ENCODE measurements at regions of chr1 and their contacts with region 1.

Region 1: DNA sequence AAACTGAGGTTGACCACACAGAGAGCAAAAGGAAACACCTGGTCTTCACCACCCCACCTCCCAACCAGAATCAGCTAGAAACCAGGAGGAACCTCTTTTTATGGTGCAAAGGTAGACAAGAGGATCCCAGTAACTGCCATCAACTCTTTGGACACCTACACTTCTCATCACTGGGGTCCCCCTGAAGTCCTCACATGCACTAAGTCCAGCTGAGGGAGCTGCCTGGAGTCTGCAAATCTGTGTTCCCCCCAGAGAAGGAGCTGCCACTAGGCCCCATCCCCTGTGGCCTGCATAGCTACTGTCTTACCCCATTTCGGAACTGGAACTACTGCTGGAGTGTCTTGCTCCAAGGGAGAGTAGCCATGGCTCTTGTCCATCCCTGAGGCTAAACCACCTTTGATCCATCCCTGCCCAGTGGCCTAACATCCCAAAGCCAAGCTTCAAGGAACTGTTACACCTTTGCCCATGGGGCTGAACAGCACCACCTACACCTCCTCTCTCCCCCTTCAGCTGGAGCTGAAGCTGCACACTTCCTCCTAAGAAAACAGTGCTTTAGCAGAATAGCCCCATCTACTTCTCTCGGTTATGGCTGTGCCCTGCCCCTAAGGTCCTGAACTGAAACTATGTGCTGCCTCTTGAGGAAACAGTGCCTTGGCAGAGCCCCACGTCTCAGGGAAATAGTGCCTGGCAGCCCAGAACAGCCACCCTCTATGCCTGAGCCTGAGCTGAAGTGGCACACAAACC is 85.4 kb upstream of the CD53 start:
- DNase-seq: peak; percentile 64 to 82 (median 75)
- H3K4me3 ChIP-seq: peak overlapping the region in 1 of 2 donors; percentile 19
- H3K4me3 Mint-ChIP-seq: peak overlapping the region; percentile 78 to 88 (median 82)
- H3K27ac ChIP-seq: peak overlapping the region; percentile 34
- H3K27ac Mint-ChIP-seq: peak overlapping the region; percentile 76 to 95 (median 92)
- H3K4me1 ChIP-seq: peaks cover 65% of the 10 kb centered on the region
- H3K4me1 Mint-ChIP-seq: peaks cover 55 to 70% (median 64%) of the 10 kb centered on the region in 4 donors
- H3K27me3 ChIP-seq: no peaks in the 10 kb centered on the region
- H3K27me3 Mint-ChIP-seq: peaks cover 0 to 1% of the 10 kb centered on the region in 2 donors

Region 2: GRCh38 chr1:110630839-110631663 is 156.4 kb before region 1 on chr1:
- CTCF ChIA-PET with region 1: interaction called, 19 read pairs
- POLR2A ChIA-PET with region 1: interaction called, 16 read pairs
- intact Hi-C with region 1: loop called (anchors 1 kb)
- DNase-seq: peak; percentile 87 to 92 (median 88)
- H3K4me3 ChIP-seq: peak overlapping the region; percentile 25 to 46
- H3K4me3 Mint-ChIP-seq: no peak overlapping the region
- H3K27ac ChIP-seq: peak overlapping the region; percentile 72
- H3K27ac Mint-ChIP-seq: no peak overlapping the region
- H3K4me1 ChIP-seq: peaks cover 95% of the 10 kb centered on the region
- H3K4me1 Mint-ChIP-seq: peaks cover 32 to 57% (median 54%) of the 10 kb centered on the region in 4 donors
- H3K27me3 ChIP-seq: no peaks in the 10 kb centered on the region
- H3K27me3 Mint-ChIP-seq: no peaks in the 10 kb centered on the region

Region 3: DNA sequence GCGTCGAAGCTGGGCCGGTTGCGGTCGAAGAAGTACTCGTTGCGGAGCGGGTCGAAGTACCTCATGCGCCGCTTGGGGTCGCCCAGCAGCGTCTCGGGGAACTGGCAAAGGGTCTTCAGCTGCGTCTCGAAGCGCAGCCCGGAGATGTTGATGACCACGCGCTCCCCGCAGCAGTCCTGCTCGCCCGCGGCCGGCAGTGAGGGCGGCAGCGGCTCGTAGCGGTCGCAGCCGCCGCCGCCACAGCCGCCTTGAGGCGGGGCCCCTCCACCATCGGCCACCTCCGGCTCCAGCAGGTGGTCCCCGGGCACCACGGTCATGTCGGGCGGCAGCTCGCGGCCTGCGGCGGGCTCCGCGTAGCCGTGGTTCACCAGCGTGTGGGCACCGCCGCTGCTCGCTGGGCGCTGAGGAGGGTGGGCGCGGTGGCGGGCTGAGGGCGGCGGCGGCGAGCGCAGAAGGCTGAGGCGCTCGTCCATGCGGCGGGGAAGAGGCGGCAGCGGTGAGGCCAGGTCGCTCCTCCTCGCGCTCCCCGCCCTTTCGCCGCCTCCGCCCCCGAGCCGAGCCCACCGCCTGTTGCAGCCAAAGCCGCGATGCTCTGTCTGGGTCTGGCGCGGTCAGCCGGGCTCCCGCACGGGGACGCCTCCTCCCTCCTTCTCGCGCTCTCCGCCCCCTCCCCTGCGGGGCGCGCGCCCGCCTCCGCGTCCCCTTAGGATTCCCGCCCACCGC is 113.0 kb before region 1 on chr1 and contains the start of gene KCNA3:
- CTCF ChIA-PET with region 1: interaction called, 8 read pairs
- POLR2A ChIA-PET with region 1: interaction called, 31 read pairs
- intact Hi-C with region 1: no loop called
- DNase-seq: peak; percentile 67 to 79 (median 69)
- H3K4me3 ChIP-seq: peak within 1 kb of the TSS; percentile 73 to 78
- H3K4me3 Mint-ChIP-seq: peak within 1 kb of the TSS; percentile 84 to 100 (median 100)
- H3K27ac ChIP-seq: peak within 1 kb of the TSS; percentile 91
- H3K27ac Mint-ChIP-seq: peak within 1 kb of the TSS; percentile 76 to 100 (median 99)
- H3K4me1 ChIP-seq: peaks cover 38% of the 10 kb centered on the region
- H3K4me1 Mint-ChIP-seq: peaks cover 28 to 79% (median 38%) of the 10 kb centered on the region in 4 donors
- H3K27me3 ChIP-seq: no peaks in the 10 kb centered on the region
- H3K27me3 Mint-ChIP-seq: no peaks in the 10 kb centered on the region
- total RNA-seq, gene KCNA3: 124 TPM

Region 4: DNA sequence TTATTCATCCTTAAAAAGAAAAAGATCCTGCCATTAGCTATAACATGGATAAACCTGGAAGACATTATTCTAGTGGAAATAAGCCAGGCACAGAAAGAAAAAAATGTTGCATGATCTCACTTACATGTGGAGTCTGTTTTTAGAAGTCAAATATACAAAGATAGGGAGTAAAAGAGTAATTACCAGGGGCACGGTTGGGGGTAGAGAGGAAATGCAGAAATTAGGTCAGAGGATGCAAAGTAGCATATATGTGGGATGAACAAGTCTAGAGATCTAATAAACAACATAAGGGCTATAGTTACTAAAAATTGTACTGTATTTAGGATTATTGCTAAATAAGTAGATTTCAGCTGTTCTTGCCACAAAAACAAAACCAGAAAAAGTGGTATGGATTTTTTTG is 24.0 kb after region 1 on chr1:
- CTCF ChIA-PET with region 1: interaction called, 6 read pairs
- POLR2A ChIA-PET with region 1: interaction called, 13 read pairs
- intact Hi-C with region 1: no loop called
- DNase-seq: no peak
- H3K4me3 ChIP-seq: no peak overlapping the region
- H3K4me3 Mint-ChIP-seq: peak overlapping the region in 5 of 8 donors; percentile 0 to 46 (median 19)
- H3K27ac ChIP-seq: no peak overlapping the region
- H3K27ac Mint-ChIP-seq: peak overlapping the region in 1 of 7 donors; percentile 43
- H3K4me1 ChIP-seq: peaks cover 8% of the 10 kb centered on the region
- H3K4me1 Mint-ChIP-seq: peaks cover 6 to 16% (median 10%) of the 10 kb centered on the region in 4 donors
- H3K27me3 ChIP-seq: no peaks in the 10 kb centered on the region
- H3K27me3 Mint-ChIP-seq: peaks cover 0 to 2% of the 10 kb centered on the region in 2 donors

Region 5: GRCh38 chr1:110846861-110847260 is 59.4 kb after region 1 on chr1:
- CTCF ChIA-PET with region 1: no interaction called
- POLR2A ChIA-PET with region 1: no interaction called
- intact Hi-C with region 1: no loop called
- DNase-seq: no peak
- H3K4me3 ChIP-seq: no peak overlapping the region
- H3K4me3 Mint-ChIP-seq: no peak overlapping the region
- H3K27ac ChIP-seq: no peak overlapping the region
- H3K27ac Mint-ChIP-seq: no peak overlapping the region
- H3K4me1 ChIP-seq: no peaks in the 10 kb centered on the region
- H3K4me1 Mint-ChIP-seq: peaks cover 0 to 2% (median 0%) of the 10 kb centered on the region in 4 donors
- H3K27me3 ChIP-seq: no peaks in the 10 kb centered on the region
- H3K27me3 Mint-ChIP-seq: peaks cover 0 to 10% of the 10 kb centered on the region in 2 donors

Region 6: GRCh38 chr1:110872745-110873720 is 85.5 kb after region 1 on chr1 and contains the start of gene CD53:
- CTCF ChIA-PET with region 1: interaction called, 15 read pairs
- POLR2A ChIA-PET with region 1: interaction called, 69 read pairs
- intact Hi-C with region 1: loop called (anchors 2 kb)
- DNase-seq: peak; percentile 70 to 82 (median 73)
- H3K4me3 ChIP-seq: peak within 1 kb of the TSS; percentile 79 to 92
- H3K4me3 Mint-ChIP-seq: peak within 1 kb of the TSS; percentile 94 to 100 (median 98)
- H3K27ac ChIP-seq: peak within 1 kb of the TSS; percentile 88
- H3K27ac Mint-ChIP-seq: peak within 1 kb of the TSS; percentile 93 to 99 (median 98)
- H3K4me1 ChIP-seq: peaks cover 54% of the 10 kb centered on the region
- H3K4me1 Mint-ChIP-seq: peaks cover 43 to 79% (median 52%) of the 10 kb centered on the region in 4 donors
- H3K27me3 ChIP-seq: no peaks in the 10 kb centered on the region
- H3K27me3 Mint-ChIP-seq: no peaks in the 10 kb centered on the region
- total RNA-seq, gene CD53: 337 to 338 TPM

Region 7: GRCh38 chr1:110990536-110990935 is 203.0 kb after region 1 on chr1:
- CTCF ChIA-PET with region 1: interaction called, 40 read pairs
- POLR2A ChIA-PET with region 1: interaction called, 6 read pairs
- intact Hi-C with region 1: loop called (anchors 1 kb)
- DNase-seq: no peak
- H3K4me3 ChIP-seq: no peak overlapping the region
- H3K4me3 Mint-ChIP-seq: no peak overlapping the region
- H3K27ac ChIP-seq: no peak overlapping the region
- H3K27ac Mint-ChIP-seq: no peak overlapping the region
- H3K4me1 ChIP-seq: no peaks in the 10 kb centered on the region
- H3K4me1 Mint-ChIP-seq: peaks cover 0 to 4% (median 2%) of the 10 kb centered on the region in 4 donors
- H3K27me3 ChIP-seq: no peaks in the 10 kb centered on the region
- H3K27me3 Mint-ChIP-seq: peaks cover 5 to 9% of the 10 kb centered on the region in 2 donors

Measured in CD4-positive, alpha-beta memory T cell (primary cell).